Activated CD4-positive, alpha-beta T cell treated with anti-CD3 and anti-CD28 coated beads, Interleukin-2, amount 10 ng/mL, durations not matched to agents 24 days and 14 days (primary cell): ENCODE measurements at regions of chr12 and their contacts with region 1.

Region 1: GRCh38 chr12:8108808-8109398 is 14.5 kb upstream of the CLEC4A start:
- DNase-seq: peak; percentile 93
- H3K4me3 Mint-ChIP-seq: no peak overlapping the region
- H3K27ac Mint-ChIP-seq: no peak overlapping the region
- H3K4me1 Mint-ChIP-seq: peaks cover 3% of the 10 kb centered on the region
- H3K27me3 Mint-ChIP-seq: no peaks in the 10 kb centered on the region

Region 2: DNA sequence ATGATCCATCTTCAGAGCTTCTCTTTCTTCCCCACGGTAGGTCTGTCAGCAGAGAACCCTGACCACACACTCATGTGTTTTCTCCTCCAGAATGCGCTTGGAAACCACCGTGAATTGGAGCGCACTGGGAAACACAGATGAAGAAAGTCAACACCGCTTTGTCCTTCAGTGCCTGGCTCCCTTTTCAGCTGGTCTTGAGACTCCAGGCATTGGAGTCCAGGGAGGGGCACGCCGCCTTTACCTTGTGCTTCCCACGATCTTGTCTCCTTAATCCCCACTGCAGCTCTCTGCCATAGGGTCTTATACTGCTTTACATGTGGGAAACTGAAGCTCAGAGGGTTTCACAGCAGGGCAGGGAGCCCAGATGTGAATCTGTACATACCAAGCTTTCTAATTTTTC is 117.5 kb after region 1 on chr12:
- intact Hi-C with region 1: loop called (anchors 1 kb)
- DNase-seq: no peak
- H3K4me3 Mint-ChIP-seq: no peak overlapping the region
- H3K27ac Mint-ChIP-seq: no peak overlapping the region
- H3K4me1 Mint-ChIP-seq: peaks cover 3% of the 10 kb centered on the region
- H3K27me3 Mint-ChIP-seq: no peaks in the 10 kb centered on the region